H1 (cell line): ENCODE measurements at regions of chr11 and their contacts with region 1.

Region 1: GRCh38 chr11:121035169-121035755 is 11.4 kb downstream of the TBCEL start:
- DNase-seq: no peak
- H3K4me3 ChIP-seq: no peak overlapping the region
- H3K27ac ChIP-seq: no peak overlapping the region
- H3K4me1 ChIP-seq: peaks cover 0 to 7% (median 5%) of the 10 kb centered on the region in 4 experiments; a peak in 6 of 7 replicates
- H3K27me3 ChIP-seq: no peaks in the 10 kb centered on the region
- CTCF ChIP-seq: no peak
- EP300 ChIP-seq: no peak
- POLR2A ChIP-seq: no peak
- RAD21 ChIP-seq: no peak

Region 2: DNA sequence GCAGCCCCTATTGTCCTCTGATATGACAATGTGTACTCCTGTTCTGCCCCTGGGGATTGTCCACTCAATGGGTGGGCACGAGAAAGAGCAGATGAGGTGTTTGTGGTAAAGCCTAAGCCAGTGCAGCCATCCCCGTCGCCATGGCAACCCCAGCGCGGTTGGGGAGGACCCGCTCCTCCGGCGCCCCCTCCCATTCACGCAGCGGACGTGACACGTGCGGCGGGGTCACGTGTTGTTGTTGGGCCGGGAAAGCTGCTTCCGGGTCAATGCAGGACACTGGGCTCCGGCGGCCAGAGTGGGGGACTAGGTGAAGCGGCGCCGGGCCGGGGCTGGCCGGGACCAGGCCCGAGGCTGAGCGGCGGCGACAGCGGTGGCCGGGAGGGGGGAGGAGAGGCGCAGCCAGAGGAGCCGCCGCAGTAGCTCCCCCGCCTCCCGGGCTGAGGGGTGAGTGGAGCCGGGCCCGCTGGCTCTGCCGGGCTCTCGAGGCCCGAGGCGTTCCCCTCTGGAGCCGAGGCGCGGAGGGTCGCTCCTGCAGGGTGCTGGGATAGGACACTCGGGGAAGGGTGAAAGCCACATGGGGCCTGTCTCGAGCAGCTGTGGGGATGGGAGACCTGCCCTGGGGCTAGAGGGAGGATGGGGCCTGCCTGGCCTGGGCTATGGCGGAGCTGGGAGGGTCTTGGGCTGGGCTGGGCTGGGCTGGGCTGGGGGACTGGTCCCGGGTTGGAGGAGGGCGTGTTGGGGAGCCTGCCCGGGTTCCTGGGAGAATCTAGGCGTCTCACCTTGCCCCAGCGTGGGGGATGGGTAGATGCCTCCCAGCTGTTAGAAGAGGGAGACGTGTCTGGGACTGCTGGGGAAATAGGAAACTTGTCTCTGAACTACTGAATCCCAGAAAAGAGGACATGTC is 11.2 kb before region 1 on chr11 and contains the start of gene TBCEL:
- CTCF ChIA-PET with region 1: interaction called, 7 read pairs
- POLR2A ChIA-PET with region 1: interaction called, 10 read pairs
- DNase-seq: peak; percentile 66 to 97
- H3K4me3 ChIP-seq: peak within 1 kb of the TSS; percentile 75 to 93 (median 81)
- H3K27ac ChIP-seq: peak within 1 kb of the TSS; percentile 62
- H3K4me1 ChIP-seq: peaks cover 0 to 10% (median 6%) of the 10 kb centered on the region in 4 experiments; a peak in 4 of 7 replicates
- H3K27me3 ChIP-seq: no peaks in the 10 kb centered on the region
- CTCF ChIP-seq: no peak
- EP300 ChIP-seq: 0 out of 3 replicates have a peak, but pooled peaks of 1 of the 2 experiments have one; percentile 12
- POLR2A ChIP-seq: peak; percentile 13 to 56; a peak in 2 of 3 replicates
- RAD21 ChIP-seq: no peak
- total RNA-seq, gene TBCEL: 14.3 and 16.0 TPM in 2 replicates

Region 3: GRCh38 chr11:121112498-121113455 is 77.5 kb after region 1 on chr11:
- CTCF ChIA-PET with region 1: no interaction called
- POLR2A ChIA-PET with region 1: no interaction called
- DNase-seq: peak; percentile 56 to 57
- H3K4me3 ChIP-seq: no peak overlapping the region; a peak in 1 of 8 replicates
- H3K27ac ChIP-seq: no peak overlapping the region
- H3K4me1 ChIP-seq: peaks cover 0 to 3% (median 0%) of the 10 kb centered on the region in 4 experiments; a peak in 2 of 7 replicates
- H3K27me3 ChIP-seq: no peaks in the 10 kb centered on the region
- CTCF ChIP-seq: peak; percentile 28 to 77 (median 70)
- EP300 ChIP-seq: no peak
- POLR2A ChIP-seq: no peak
- RAD21 ChIP-seq: peak; percentile 84 to 89

Region 4: GRCh38 chr11:121367001-121367843 is 332.0 kb after region 1 on chr11:
- CTCF ChIA-PET with region 1: no interaction called
- POLR2A ChIA-PET with region 1: no interaction called
- DNase-seq: no peak
- H3K4me3 ChIP-seq: no peak overlapping the region
- H3K27ac ChIP-seq: no peak overlapping the region
- H3K4me1 ChIP-seq: peaks cover 0 to 13% (median 4%) of the 10 kb centered on the region in 4 experiments; a peak in 4 of 7 replicates
- H3K27me3 ChIP-seq: no peaks in the 10 kb centered on the region; a peak in 1 of 7 replicates
- CTCF ChIP-seq: peak in 1 of 3 experiments; percentile 1; a peak in 1 of 4 replicates
- EP300 ChIP-seq: no peak
- POLR2A ChIP-seq: no peak
- RAD21 ChIP-seq: no peak